ENCODE measurements at regions of chr1 and their contacts with region 1.

Region 1: GRCh38 chr1:103514920-103515503 is 10.5 kb upstream of the RNPC3 start:
- DNase-seq: no peak
- H3K4me3 ChIP-seq: no peak overlapping the region
- H3K27ac ChIP-seq: no peak overlapping the region
- H3K27me3 ChIP-seq: no peaks in the 10 kb centered on the region
- CTCF ChIP-seq: peak; percentile 83

Region 2: GRCh38 chr1:103106426-103107341 is 408.3 kb before region 1 on chr1:
- CTCF ChIA-PET with region 1: interaction called, 16 read pairs
- POLR2A ChIA-PET with region 1: no interaction called
- DNase-seq: no peak
- H3K4me3 ChIP-seq: peak overlapping the region; percentile 61
- H3K27ac ChIP-seq: no peak overlapping the region
- H3K27me3 ChIP-seq: no peaks in the 10 kb centered on the region
- CTCF ChIP-seq: peak; percentile 58

Region 3: GRCh38 chr1:103129255-103129654 is 385.8 kb before region 1 on chr1:
- CTCF ChIA-PET with region 1: no interaction called
- POLR2A ChIA-PET with region 1: no interaction called
- DNase-seq: no peak
- H3K4me3 ChIP-seq: no peak overlapping the region
- H3K27ac ChIP-seq: no peak overlapping the region
- H3K27me3 ChIP-seq: no peaks in the 10 kb centered on the region
- CTCF ChIP-seq: no peak

Region 4: GRCh38 chr1:103250441-103250861 is 264.6 kb before region 1 on chr1:
- CTCF ChIA-PET with region 1: no interaction called
- POLR2A ChIA-PET with region 1: no interaction called
- DNase-seq: no peak
- H3K4me3 ChIP-seq: no peak overlapping the region
- H3K27ac ChIP-seq: no peak overlapping the region
- H3K27me3 ChIP-seq: no peaks in the 10 kb centered on the region
- CTCF ChIP-seq: no peak

Region 5: DNA sequence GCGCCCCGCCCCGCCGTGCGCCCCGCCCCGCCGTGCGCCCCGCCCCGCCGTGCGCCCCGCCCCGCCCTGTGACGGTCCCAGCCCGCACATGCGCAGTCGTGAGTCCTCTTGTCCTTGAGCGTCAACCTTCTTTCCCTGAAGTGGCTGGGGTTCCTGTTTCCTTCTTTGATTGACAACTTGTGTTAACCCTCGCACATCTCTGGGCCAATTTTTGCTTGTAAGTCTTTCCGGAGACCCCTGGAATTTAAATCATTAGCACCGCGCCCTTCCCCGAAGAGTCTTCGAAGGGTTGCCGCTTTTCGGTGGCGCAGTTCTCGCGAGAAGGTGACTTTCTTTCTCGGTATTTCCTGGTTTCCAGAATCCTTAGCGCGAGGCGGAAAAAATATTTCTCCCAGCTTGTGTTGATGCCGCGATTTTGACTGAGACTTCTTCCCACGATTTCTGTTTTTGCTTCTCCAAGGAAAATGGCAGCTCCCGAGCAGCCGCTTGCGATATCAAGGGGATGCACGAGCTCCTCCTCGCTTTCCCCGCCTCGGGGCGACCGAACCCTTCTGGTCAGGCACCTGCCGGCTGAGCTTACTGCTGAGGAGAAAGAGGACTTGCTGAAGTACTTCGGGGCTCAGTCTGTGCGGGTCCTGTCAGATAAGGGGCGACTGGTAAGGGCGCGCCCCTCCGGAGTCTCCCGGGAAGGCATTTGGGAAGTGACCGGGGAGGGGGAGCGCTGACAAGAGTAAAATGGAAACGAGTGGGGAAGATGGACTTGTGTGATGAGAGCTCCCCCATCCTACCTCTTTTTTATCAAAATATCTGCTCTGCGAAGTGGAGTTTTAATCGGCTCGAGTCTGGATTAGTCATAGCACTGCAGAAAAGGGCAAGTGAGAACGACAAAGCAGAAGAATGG is 10.8 kb after region 1 on chr1 and contains the start of gene RNPC3:
- CTCF ChIA-PET with region 1: interaction called, 19 read pairs
- POLR2A ChIA-PET with region 1: no interaction called
- DNase-seq: peak; percentile 81
- H3K4me3 ChIP-seq: peak within 1 kb of the TSS; percentile 89
- H3K27ac ChIP-seq: peak within 1 kb of the TSS; percentile 97
- H3K27me3 ChIP-seq: no peaks in the 10 kb centered on the region
- CTCF ChIP-seq: no peak; the same call in 1 of the 2 replicates
- polyA plus RNA-seq, gene RNPC3: 12.9 and 18.3 TPM in 2 replicates